ENCODE measurements at regions of chr3 and their contacts with region 1.

Region 1: GRCh38 chr3:63863148-63864007 is at the starts of genes ATXN7 and THOC7:
- DNase-seq: peak; percentile 45 to 85 (median 70)
- ATAC-seq: peak; percentile 75
- H3K4me3 ChIP-seq: peak within 1 kb of the TSS; percentile 71 to 89
- H3K4me3 Mint-ChIP-seq: peak within 1 kb of the TSS; percentile 94
- H3K27ac ChIP-seq: peak within 1 kb of the TSS; percentile 60 to 63
- H3K27ac Mint-ChIP-seq: peak within 1 kb of the TSS; percentile 93
- H3K4me1 ChIP-seq: peaks cover 19% of the 10 kb centered on the region
- H3K4me1 Mint-ChIP-seq: peaks cover 64% of the 10 kb centered on the region
- H3K27me3 ChIP-seq: no peaks in the 10 kb centered on the region
- H3K27me3 Mint-ChIP-seq: no peaks in the 10 kb centered on the region
- CTCF ChIP-seq: no peak
- total RNA-seq, gene ATXN7: 273 to 278 TPM
- total RNA-seq, gene THOC7: 23.0 to 25.5 TPM

Region 2: DNA sequence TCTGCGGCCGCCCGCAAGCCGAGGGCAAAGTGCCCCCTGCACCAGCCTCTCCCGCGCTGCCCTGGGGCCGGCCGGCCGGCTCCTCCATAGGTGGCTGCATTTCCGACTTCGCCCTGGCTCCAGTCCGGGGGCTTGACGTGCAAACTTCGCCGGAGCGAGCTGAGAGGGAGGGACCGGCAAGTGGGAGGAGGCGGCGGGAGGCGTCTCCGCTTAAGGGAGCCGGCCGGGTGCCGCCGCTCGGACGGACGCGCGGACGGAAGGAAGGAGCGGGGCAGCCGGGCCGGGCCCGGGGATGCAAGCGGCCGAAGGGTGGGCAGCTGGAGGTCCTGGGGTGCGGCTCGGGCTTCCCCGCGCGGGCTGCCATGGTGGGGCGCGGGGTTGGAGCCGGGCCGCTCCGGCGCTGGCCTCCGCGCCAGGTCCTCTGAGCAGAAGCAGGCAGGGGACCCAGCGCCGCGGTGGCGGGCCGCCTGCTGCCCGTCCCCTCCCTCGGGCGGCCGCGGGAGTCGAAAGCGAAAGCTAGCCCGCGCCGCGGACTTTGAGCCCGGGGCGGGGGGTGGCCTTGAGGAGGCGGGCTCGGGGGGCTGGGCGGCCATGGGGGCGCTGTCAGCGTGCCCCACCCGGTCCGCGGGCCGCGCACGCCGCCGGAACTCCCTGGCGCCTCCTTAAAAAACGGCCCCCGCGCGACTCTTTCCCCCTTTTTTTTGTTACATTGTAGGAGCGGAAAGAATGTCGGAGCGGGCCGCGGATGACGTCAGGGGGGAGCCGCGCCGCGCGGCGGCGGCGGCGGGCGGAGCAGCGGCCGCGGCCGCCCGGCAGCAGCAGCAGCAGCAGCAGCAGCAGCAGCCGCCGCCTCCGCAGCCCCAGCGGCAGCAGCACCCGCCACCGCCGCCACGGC is 48.7 kb after region 1 on chr3 and contains the start of gene SCAANT1:
- CTCF ChIA-PET with region 1: no interaction called
- POLR2A ChIA-PET with region 1: interaction called, 7 read pairs
- intact Hi-C with region 1: loop called (anchors 1 to 2 kb)
- DNase-seq: peak; percentile 64 to 92 (median 81)
- ATAC-seq: peak; percentile 66
- H3K4me3 ChIP-seq: peak within 1 kb of the TSS; percentile 76 to 85
- H3K4me3 Mint-ChIP-seq: peak within 1 kb of the TSS; percentile 92
- H3K27ac ChIP-seq: peak within 1 kb of the TSS; percentile 82 to 84
- H3K27ac Mint-ChIP-seq: peak within 1 kb of the TSS; percentile 95
- H3K4me1 ChIP-seq: peaks cover 15% of the 10 kb centered on the region
- H3K4me1 Mint-ChIP-seq: peaks cover 42% of the 10 kb centered on the region
- H3K27me3 ChIP-seq: no peaks in the 10 kb centered on the region
- H3K27me3 Mint-ChIP-seq: no peaks in the 10 kb centered on the region
- CTCF ChIP-seq: no peak
- total RNA-seq, gene SCAANT1: not detected